ENCODE measurements at regions of chr9 and their contacts with region 1.

Region 1: GRCh38 chr9:96217754-96218693 is 84.0 kb downstream of the HSD17B3 start:
- DNase-seq: peak; percentile 30
- ATAC-seq: peak; percentile 99
- H3K4me3 ChIP-seq: peak overlapping the region; percentile 28
- H3K27ac ChIP-seq: no peak overlapping the region
- H3K4me1 ChIP-seq: peaks cover 2% of the 10 kb centered on the region; the same call in 1 of the 2 replicates
- H3K27me3 ChIP-seq: peaks cover 34% of the 10 kb centered on the region
- CTCF ChIP-seq: peak; percentile 99
- POLR2A ChIP-seq: peak; percentile 54; the same call in 1 of the 2 replicates
- RAD21 ChIP-seq: peak; percentile 98

Region 2: GRCh38 chr9:95127249-95128176 is 1090.5 kb before region 1 on chr9:
- CTCF ChIA-PET with region 1: no interaction called
- POLR2A ChIA-PET with region 1: no interaction called
- dilution Hi-C with region 1: no loop called
- in situ Hi-C with region 1: no loop called
- intact Hi-C with region 1: loop called (anchors 5 kb)
- DNase-seq: peak; percentile 71
- ATAC-seq: peak; percentile 99
- H3K4me3 ChIP-seq: peak overlapping the region; percentile 27; the same call in 1 of the 2 replicates
- H3K27ac ChIP-seq: no peak overlapping the region
- H3K4me1 ChIP-seq: peaks cover 2% of the 10 kb centered on the region; the same call in 1 of the 2 replicates
- H3K27me3 ChIP-seq: no peaks in the 10 kb centered on the region
- CTCF ChIP-seq: peak; percentile 99
- POLR2A ChIP-seq: no peak
- RAD21 ChIP-seq: peak; percentile 87

Region 3: GRCh38 chr9:95317119-95317892 is 900.7 kb before region 1 on chr9 and contains the start of gene FANCC:
- CTCF ChIA-PET with region 1: no interaction called
- POLR2A ChIA-PET with region 1: no interaction called
- dilution Hi-C with region 1: no loop called
- in situ Hi-C with region 1: no loop called
- intact Hi-C with region 1: loop called (anchors 5 kb)
- DNase-seq: peak; percentile 86
- ATAC-seq: peak; percentile 92
- H3K4me3 ChIP-seq: peak within 1 kb of the TSS; percentile 99
- H3K27ac ChIP-seq: peak within 1 kb of the TSS; percentile 100
- H3K4me1 ChIP-seq: peaks cover 2% of the 10 kb centered on the region; the same call in 1 of the 2 replicates
- H3K27me3 ChIP-seq: no peaks in the 10 kb centered on the region
- CTCF ChIP-seq: no peak
- POLR2A ChIP-seq: peak; percentile 86
- RAD21 ChIP-seq: no peak
- total RNA-seq, gene FANCC: 6.3 and 6.4 TPM in 2 replicates

Region 4: GRCh38 chr9:95510709-95511615 is 707.1 kb before region 1 on chr9:
- CTCF ChIA-PET with region 1: no interaction called
- POLR2A ChIA-PET with region 1: no interaction called
- dilution Hi-C with region 1: no loop called
- in situ Hi-C with region 1: no loop called
- intact Hi-C with region 1: loop called (anchors 2 kb)
- DNase-seq: peak; percentile 97
- ATAC-seq: peak; percentile 77
- H3K4me3 ChIP-seq: peak overlapping the region; percentile 84
- H3K27ac ChIP-seq: peak overlapping the region; percentile 99
- H3K4me1 ChIP-seq: peaks cover 4% of the 10 kb centered on the region
- H3K27me3 ChIP-seq: no peaks in the 10 kb centered on the region; the same call in 1 of the 2 replicates
- CTCF ChIP-seq: no peak
- POLR2A ChIP-seq: peak; percentile 28; the same call in 1 of the 2 replicates
- RAD21 ChIP-seq: no peak

Region 5: GRCh38 chr9:95793924-95794828 is 423.8 kb before region 1 on chr9:
- CTCF ChIA-PET with region 1: no interaction called
- POLR2A ChIA-PET with region 1: no interaction called
- dilution Hi-C with region 1: no loop called
- in situ Hi-C with region 1: no loop called
- intact Hi-C with region 1: loop called (anchors 5 kb)
- DNase-seq: peak; percentile 98
- ATAC-seq: peak; percentile 95
- H3K4me3 ChIP-seq: no peak overlapping the region
- H3K27ac ChIP-seq: peak overlapping the region; percentile 97; the same call in 1 of the 2 replicates
- H3K4me1 ChIP-seq: peaks cover 9% of the 10 kb centered on the region
- H3K27me3 ChIP-seq: peaks cover 19% of the 10 kb centered on the region
- CTCF ChIP-seq: no peak
- POLR2A ChIP-seq: no peak
- RAD21 ChIP-seq: no peak

Region 6: DNA sequence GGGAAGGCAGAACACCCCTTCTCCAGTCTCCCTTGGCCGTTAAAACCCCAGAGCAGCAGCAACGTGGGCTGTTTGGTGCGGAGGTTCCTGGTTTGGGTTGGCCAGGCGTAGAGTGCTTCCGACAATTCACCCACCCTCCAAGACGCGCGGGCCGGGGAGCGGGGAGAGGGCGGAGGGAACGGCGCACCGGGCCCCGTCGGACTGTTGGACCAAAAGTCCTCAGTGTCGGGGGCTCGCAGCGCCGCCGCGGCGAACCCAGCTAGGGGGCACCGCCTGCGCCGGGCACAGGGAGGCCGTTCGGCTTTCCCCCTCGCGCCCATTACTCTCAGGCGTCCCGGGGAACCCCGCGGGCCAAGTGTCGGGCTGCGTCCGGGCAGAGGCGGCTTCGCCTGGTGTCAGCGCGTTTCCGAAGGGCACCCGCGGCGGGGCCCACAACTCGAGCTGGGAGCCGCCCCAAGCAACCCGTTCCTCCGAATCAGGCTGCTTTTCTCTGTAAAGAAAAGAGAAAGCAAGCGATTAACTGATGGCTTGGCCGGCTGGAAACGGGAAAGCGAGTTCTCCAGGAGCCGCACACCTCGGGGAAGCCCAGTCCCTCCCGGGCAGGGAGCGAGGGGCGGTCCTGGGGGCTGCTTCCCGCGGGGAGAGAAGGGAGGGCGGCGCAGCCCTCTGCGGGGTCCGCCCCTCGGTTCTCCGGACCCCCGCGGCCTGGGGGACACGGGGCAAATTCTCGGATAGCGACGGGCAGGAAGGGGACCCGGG is 197.1 kb before region 1 on chr9:
- CTCF ChIA-PET with region 1: no interaction called
- POLR2A ChIA-PET with region 1: no interaction called
- dilution Hi-C with region 1: no loop called
- in situ Hi-C with region 1: no loop called
- intact Hi-C with region 1: loop called (anchors 10 kb)
- DNase-seq: no peak
- ATAC-seq: peak; percentile 71
- H3K4me3 ChIP-seq: peak overlapping the region; percentile 41
- H3K27ac ChIP-seq: no peak overlapping the region
- H3K4me1 ChIP-seq: no peaks in the 10 kb centered on the region
- H3K27me3 ChIP-seq: peaks cover 55% of the 10 kb centered on the region
- CTCF ChIP-seq: no peak
- POLR2A ChIP-seq: no peak
- RAD21 ChIP-seq: no peak

Region 7: GRCh38 chr9:96136992-96137670 is 80.9 kb before region 1 on chr9:
- CTCF ChIA-PET with region 1: no interaction called
- POLR2A ChIA-PET with region 1: no interaction called
- dilution Hi-C with region 1: no loop called
- in situ Hi-C with region 1: no loop called
- intact Hi-C with region 1: no loop called
- DNase-seq: peak; percentile 78
- ATAC-seq: peak; percentile 83
- H3K4me3 ChIP-seq: peak overlapping the region; percentile 35
- H3K27ac ChIP-seq: peak overlapping the region; percentile 89; the same call in 1 of the 2 replicates
- H3K4me1 ChIP-seq: peaks cover 29% of the 10 kb centered on the region
- H3K27me3 ChIP-seq: peaks cover 28% of the 10 kb centered on the region
- CTCF ChIP-seq: no peak
- POLR2A ChIP-seq: no peak
- RAD21 ChIP-seq: no peak

Measured in IMR-90 (cell line).